ENCODE measurements at regions of chr7 and their contacts with region 1.

Region 1: GRCh38 chr7:106736508-106737201 is 75.7 kb upstream of the CCDC71L start:
- DNase-seq: no peak
- ATAC-seq: peak; percentile 99
- H3K4me3 ChIP-seq: no peak overlapping the region
- H3K27ac ChIP-seq: no peak overlapping the region
- H3K4me1 ChIP-seq: peaks cover 2 to 16% of the 10 kb centered on the region in 2 donors
- H3K27me3 ChIP-seq: no peaks in the 10 kb centered on the region
- CTCF ChIP-seq: peak; percentile 51 to 74

Region 2: GRCh38 chr7:106176414-106177299 is 560.0 kb before region 1 on chr7:
- intact Hi-C with region 1: loop called in 1 of 2 experiments (anchors 5 kb)
- DNase-seq: peak; percentile 65 to 92 (median 80)
- ATAC-seq: peak; percentile 93
- H3K4me3 ChIP-seq: no peak overlapping the region
- H3K27ac ChIP-seq: no peak overlapping the region
- H3K4me1 ChIP-seq: peaks cover 11 to 16% of the 10 kb centered on the region in 2 donors
- H3K27me3 ChIP-seq: peaks cover 0 to 7% of the 10 kb centered on the region in 2 donors
- CTCF ChIP-seq: peak; percentile 91 to 93

Region 3: DNA sequence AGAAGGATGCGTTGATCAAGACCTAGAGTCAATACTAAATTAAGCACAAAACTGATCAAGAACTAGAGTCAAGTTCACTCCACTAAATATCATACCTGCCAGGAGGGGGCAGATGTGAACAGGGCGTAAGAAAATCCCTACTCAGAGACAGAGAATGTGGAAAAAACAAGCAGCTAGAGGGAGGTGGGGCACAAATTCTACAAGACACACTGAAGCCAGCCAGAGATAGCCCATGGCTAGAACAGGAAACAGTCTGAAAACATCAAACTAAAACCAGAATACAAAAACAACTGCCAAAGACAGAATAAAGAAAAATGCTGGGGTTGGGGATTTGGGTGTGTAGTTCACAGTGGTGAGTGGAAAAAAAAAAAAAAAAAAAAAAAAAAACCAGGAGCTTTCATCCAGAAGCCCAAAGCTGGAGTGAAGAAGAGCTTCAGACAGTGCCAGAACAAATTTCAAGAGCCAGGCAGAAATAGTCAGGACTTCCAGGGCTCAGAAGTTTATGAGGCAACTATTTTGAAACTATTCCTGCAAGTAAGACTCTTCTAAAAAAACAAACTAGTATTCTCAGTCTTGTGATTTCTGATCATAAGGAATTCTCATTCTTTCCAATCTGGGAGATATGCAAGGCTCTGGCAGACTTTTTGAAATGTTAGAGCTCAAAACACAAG is 194.0 kb before region 1 on chr7:
- intact Hi-C with region 1: loop called in 1 of 2 experiments (anchors 10 kb)
- DNase-seq: peak in 1 of 4 donors; percentile 32
- ATAC-seq: peak; percentile 97
- H3K4me3 ChIP-seq: no peak overlapping the region
- H3K27ac ChIP-seq: peak overlapping the region; percentile 23 to 48
- H3K4me1 ChIP-seq: no peaks in the 10 kb centered on the region
- H3K27me3 ChIP-seq: no peaks in the 10 kb centered on the region
- CTCF ChIP-seq: peak; percentile 43 to 56

Region 4: DNA sequence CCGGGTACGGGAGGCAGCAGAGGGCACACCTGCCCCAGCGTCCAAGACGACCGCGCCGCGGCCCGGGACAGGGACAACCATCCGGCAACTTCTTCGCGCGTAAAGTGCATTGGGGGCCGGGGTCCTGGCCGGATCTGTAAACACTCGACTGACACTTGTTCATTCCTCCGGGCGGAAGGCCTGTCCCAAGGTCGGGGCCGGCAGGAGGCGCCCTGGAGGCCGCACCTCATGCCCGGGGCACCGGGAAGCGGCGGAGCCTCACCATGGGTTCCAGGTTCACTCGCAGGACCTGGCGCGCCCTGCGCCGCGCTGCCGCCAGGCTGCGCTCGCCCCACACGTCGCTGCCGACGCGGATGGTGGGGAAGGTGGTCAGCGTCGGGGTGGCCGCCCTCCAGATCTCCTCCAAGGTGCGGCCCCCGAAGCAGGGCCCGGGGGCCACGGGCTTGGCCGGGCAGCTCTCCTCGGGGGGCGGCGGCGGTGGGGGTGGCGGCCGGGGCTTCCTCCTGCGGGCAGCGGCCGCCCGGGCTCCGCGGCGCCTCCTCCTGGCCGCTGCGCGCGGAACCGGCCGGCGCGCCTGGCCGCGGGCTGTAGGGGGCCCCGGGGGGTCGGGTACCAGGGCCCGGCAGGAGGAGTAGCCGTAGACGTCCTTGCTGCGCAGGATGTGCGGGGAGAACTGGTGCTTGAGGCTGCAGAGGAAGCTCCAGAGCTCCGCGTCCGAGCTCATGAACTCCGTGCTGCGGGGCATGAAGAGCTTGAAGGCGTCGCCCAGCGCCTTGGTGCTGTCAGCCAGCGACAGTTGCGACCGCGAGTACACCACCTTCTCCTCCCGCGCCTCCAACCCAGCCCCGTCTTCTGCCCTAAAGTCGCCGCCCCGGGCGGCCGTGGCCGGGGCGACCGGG is 76.4 kb before region 1 on chr7:
- intact Hi-C with region 1: loop called in 1 of 2 experiments (anchors 5 kb)
- DNase-seq: peak; percentile 40 to 97 (median 81)
- ATAC-seq: peak; percentile 85
- H3K4me3 ChIP-seq: peak overlapping the region; percentile 77 to 82
- H3K27ac ChIP-seq: peak overlapping the region; percentile 97 to 98
- H3K4me1 ChIP-seq: peaks cover 0 to 30% of the 10 kb centered on the region in 2 donors
- H3K27me3 ChIP-seq: no peaks in the 10 kb centered on the region
- CTCF ChIP-seq: peak; percentile 66 to 84

Region 5: DNA sequence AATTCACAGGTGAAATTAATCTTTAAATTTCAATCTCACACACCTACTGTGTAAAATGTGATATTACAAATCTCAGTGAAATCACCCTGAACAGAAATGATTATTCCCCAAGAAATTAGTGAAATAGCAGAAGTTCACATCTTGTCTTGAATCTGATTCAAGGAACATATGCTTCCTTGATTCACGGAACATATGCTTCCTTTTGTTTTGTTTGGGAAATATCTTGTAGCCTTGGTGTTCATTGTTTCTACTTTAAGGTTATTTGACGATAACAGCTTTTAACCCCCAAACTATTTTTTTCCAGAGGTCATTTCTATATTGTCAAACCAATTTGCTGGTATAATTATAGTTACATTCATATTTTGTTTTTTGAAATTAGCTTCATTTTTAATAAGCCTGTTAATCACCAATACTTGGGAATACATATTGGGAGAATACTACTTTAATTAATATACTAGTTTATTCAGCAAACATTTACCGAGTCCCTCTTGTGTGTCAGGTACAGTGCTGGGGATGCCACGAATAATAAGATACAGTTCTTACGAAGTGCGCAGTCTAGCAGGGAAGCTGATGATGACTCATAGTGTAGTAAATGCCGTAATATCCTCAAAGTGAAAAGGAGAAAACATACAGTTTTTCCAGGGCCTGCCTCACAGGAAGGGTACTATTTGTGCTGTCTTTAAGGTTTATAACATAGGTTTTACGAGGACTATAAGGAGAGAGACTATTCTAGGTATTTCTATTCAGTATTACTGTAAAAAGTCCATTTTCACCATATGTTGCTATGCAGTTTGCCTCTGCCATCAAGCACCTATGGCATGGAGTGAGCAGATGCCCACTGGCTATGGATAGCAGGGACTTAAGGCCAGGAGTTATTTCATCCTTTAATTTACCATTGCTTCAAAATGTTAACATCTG is 340.4 kb after region 1 on chr7:
- intact Hi-C with region 1: no loop called
- DNase-seq: no peak
- ATAC-seq: peak; percentile 42
- H3K4me3 ChIP-seq: no peak overlapping the region
- H3K27ac ChIP-seq: no peak overlapping the region
- H3K4me1 ChIP-seq: no peaks in the 10 kb centered on the region
- H3K27me3 ChIP-seq: no peaks in the 10 kb centered on the region
- CTCF ChIP-seq: no peak